Natural killer cell (primary cell): ENCODE measurements at regions of chr20 and their contacts with region 1.

Region 1: DNA sequence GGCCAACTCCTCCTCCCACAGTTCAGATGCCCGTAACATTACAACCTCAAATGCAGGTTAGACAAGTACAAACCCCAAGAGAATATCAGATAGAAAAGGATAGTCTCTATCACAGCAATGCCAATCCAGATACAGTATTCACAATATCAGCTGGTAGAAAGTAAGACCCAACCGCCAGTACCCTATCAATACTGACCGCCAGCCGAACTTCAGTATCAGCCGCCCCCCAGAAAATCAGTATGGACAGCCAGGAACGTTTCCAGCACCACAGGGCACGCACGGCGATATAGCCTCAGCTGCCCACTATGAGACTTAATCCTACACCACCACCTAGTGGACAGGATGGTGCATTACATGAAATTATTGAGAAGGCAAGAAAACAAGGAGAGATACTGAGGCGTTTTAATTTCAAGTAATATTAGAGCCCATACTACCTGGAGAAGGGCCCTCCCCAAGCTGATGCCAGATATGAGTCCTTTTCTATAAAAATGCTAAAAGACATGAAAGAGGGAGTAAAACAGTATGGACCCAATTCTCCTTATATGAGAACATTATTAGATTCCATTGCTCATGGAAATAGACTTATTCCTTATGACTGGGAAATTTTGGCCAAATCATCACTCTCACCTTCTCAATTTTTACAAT is 17.6 kb upstream of the EIF2S2 start:
- DNase-seq: peak; percentile 34 to 87
- ATAC-seq: peak; percentile 90 to 99 (median 99)
- H3K4me3 ChIP-seq: no peak overlapping the region
- H3K4me3 Mint-ChIP-seq: no peak overlapping the region
- H3K27ac ChIP-seq: no peak overlapping the region
- H3K27ac Mint-ChIP-seq: no peak overlapping the region
- H3K4me1 ChIP-seq: peaks cover 4% of the 10 kb centered on the region
- H3K4me1 Mint-ChIP-seq: peaks cover 5 to 6% of the 10 kb centered on the region in 2 donors
- H3K27me3 ChIP-seq: no peaks in the 10 kb centered on the region
- H3K27me3 Mint-ChIP-seq: peaks cover 9 to 31% of the 10 kb centered on the region in 2 donors
- CTCF ChIP-seq: peak; percentile 86

Region 2: DNA sequence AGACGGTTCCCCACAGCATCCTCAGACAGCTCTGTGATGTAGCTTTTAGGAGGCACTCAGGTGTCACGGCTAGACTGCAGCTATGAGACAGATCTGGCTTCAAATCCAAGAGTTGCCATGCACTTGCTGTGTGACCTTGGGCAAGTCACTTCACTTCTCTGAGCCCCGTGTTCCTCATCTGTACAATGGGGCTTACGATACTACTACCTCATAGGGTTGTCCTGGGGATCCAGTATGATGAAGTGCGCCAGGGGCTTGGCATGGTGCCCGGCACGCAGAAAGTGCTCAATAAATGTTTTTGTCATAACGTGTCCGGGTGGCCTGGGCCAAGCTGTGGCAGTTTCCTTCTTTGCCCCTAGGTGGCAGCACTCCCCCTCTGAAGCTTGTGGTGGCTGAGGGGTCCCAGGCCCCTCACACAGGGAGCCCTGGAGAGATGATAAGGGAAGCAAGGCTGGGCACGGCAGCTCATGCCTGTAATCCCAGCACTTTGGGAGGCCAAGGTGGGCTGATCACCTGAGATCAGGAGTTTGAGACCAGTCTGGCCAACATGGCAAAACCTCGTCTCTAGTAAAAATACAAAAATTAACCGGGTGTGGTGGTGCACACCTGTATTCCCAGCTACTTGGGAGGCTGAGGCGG is 337.6 kb before region 1 on chr20:
- intact Hi-C with region 1: loop called (anchors 2 kb)
- DNase-seq: peak; percentile 31 to 72
- ATAC-seq: peak in 2 of 3 donors; percentile 64 to 70
- H3K4me3 ChIP-seq: no peak overlapping the region
- H3K4me3 Mint-ChIP-seq: no peak overlapping the region
- H3K27ac ChIP-seq: no peak overlapping the region
- H3K27ac Mint-ChIP-seq: no peak overlapping the region
- H3K4me1 ChIP-seq: peaks cover 7% of the 10 kb centered on the region
- H3K4me1 Mint-ChIP-seq: peaks cover 10% of the 10 kb centered on the region in 2 donors
- H3K27me3 ChIP-seq: no peaks in the 10 kb centered on the region
- H3K27me3 Mint-ChIP-seq: no peaks in the 10 kb centered on the region
- CTCF ChIP-seq: peak; percentile 76

Region 3: GRCh38 chr20:33862709-33863403 is 266.8 kb before region 1 on chr20:
- intact Hi-C with region 1: loop called (anchors 1 kb)
- DNase-seq: peak; percentile 33 to 64
- ATAC-seq: peak; percentile 47 to 60 (median 55)
- H3K4me3 ChIP-seq: no peak overlapping the region
- H3K4me3 Mint-ChIP-seq: no peak overlapping the region
- H3K27ac ChIP-seq: no peak overlapping the region
- H3K27ac Mint-ChIP-seq: no peak overlapping the region
- H3K4me1 ChIP-seq: peaks cover 24% of the 10 kb centered on the region
- H3K4me1 Mint-ChIP-seq: peaks cover 14 to 22% of the 10 kb centered on the region in 2 donors
- H3K27me3 ChIP-seq: no peaks in the 10 kb centered on the region
- H3K27me3 Mint-ChIP-seq: no peaks in the 10 kb centered on the region
- CTCF ChIP-seq: peak; percentile 52

Region 4: GRCh38 chr20:33915726-33916331 is 213.8 kb before region 1 on chr20:
- intact Hi-C with region 1: loop called (anchors 1 kb)
- DNase-seq: peak; percentile 57 to 72
- ATAC-seq: peak; percentile 67 to 76 (median 74)
- H3K4me3 ChIP-seq: no peak overlapping the region
- H3K4me3 Mint-ChIP-seq: no peak overlapping the region
- H3K27ac ChIP-seq: no peak overlapping the region
- H3K27ac Mint-ChIP-seq: no peak overlapping the region
- H3K4me1 ChIP-seq: no peaks in the 10 kb centered on the region
- H3K4me1 Mint-ChIP-seq: no peaks in the 10 kb centered on the region
- H3K27me3 ChIP-seq: no peaks in the 10 kb centered on the region
- H3K27me3 Mint-ChIP-seq: peaks cover 7 to 10% of the 10 kb centered on the region in 2 donors
- CTCF ChIP-seq: peak; percentile 78

Region 5: DNA sequence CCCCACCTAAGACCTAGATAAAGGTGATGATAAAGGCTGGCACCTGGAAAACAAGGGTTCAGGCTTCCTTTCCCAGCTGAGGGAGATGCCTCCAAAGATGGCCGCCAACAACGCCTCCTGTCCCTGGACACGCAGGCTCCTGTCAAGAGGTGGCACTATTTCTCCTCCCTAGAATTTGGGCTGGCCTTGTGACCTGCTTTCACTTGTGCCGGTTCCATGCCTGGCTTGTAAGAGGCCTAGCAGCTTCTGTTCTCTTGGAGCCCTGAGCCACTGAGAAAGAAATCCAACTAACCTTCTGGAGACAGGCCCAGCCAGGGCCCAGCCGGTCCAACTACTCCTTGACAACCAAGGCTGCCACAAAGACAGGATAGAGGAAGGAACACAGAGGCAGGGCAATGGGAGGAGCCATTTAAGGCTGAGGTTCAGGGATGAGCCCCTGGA is 196.2 kb before region 1 on chr20:
- intact Hi-C with region 1: loop called (anchors 1 kb)
- DNase-seq: peak; percentile 26 to 75
- ATAC-seq: peak; percentile 70 to 82 (median 72)
- H3K4me3 ChIP-seq: no peak overlapping the region
- H3K4me3 Mint-ChIP-seq: no peak overlapping the region
- H3K27ac ChIP-seq: no peak overlapping the region
- H3K27ac Mint-ChIP-seq: no peak overlapping the region
- H3K4me1 ChIP-seq: no peaks in the 10 kb centered on the region
- H3K4me1 Mint-ChIP-seq: no peaks in the 10 kb centered on the region
- H3K27me3 ChIP-seq: no peaks in the 10 kb centered on the region
- H3K27me3 Mint-ChIP-seq: no peaks in the 10 kb centered on the region
- CTCF ChIP-seq: peak; percentile 19

Region 6: DNA sequence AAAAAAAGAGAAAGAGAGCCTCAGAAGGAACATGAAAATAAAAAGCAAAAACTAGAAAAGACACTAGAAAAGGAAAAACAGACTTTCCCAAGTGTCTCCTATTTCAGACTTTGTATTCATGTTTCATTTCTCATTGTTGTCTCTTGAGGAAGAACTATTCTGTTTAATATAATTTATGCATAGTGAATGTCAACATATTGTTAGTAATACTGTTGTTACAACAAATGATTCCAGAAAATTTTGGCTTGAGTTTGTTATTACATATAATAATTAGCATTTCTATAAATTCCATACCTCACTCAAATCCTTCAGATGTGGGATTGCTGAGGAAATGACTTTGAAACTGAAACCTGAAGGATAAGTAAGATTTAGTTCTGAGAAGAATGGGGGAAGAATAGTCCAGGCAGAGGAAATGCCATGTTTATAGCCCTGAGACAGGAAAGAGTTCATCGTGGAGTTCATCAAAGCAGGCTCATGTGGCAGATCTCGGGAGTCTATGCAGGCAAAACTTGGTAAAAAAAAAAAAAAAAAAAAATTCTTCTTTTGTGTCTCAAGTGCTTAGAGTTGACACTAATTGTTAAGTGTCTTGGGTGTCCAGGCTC is 35.5 kb after region 1 on chr20:
- intact Hi-C with region 1: no loop called
- DNase-seq: no peak
- ATAC-seq: no peak
- H3K4me3 ChIP-seq: no peak overlapping the region
- H3K4me3 Mint-ChIP-seq: no peak overlapping the region
- H3K27ac ChIP-seq: no peak overlapping the region
- H3K27ac Mint-ChIP-seq: no peak overlapping the region
- H3K4me1 ChIP-seq: no peaks in the 10 kb centered on the region
- H3K4me1 Mint-ChIP-seq: no peaks in the 10 kb centered on the region
- H3K27me3 ChIP-seq: no peaks in the 10 kb centered on the region
- H3K27me3 Mint-ChIP-seq: peaks cover 0 to under 1% of the 10 kb centered on the region in 2 donors
- CTCF ChIP-seq: no peak